CD4-positive, alpha-beta memory T cell (primary cell): ENCODE measurements at regions of chr2 and their contacts with region 1.

Region 1: DNA sequence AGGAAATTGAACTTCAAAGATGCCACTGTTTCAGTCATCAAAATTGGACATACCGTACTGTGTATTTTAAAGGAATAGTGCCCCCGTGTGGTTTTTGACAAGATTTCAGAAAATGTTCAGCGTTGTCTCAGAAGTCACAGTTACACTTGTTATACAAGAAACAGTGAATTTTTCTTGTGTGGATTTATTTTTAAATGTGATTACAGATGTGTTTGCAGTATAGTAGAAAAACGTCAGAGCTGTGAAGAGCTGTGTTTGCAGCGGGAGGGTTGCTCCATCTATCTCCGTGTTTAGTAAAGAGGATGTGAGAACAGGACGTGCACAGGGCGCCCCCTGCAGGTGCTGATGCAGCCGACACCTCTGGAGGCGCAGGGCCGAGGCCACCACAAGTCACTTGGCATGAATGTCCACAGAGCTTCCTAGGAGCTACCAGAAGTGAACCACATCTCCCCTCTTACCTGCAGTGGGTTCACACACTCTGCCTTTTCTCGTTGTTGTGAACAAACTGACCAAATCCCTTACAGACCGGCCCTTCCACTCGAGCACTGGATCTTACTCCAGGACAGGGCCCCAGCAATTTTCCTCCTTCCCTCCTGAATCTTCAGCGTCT is 73.1 kb downstream of the CACNB4 start:
- DNase-seq: peak; percentile 68 to 75 (median 73)
- H3K4me3 ChIP-seq: peak overlapping the region; percentile 3 to 30
- H3K4me3 Mint-ChIP-seq: peak overlapping the region; percentile 83 to 96 (median 88)
- H3K27ac ChIP-seq: no peak overlapping the region
- H3K27ac Mint-ChIP-seq: no peak overlapping the region
- H3K4me1 ChIP-seq: no peaks in the 10 kb centered on the region
- H3K4me1 Mint-ChIP-seq: peaks cover 6 to 10% (median 8%) of the 10 kb centered on the region in 4 donors
- H3K27me3 ChIP-seq: no peaks in the 10 kb centered on the region
- H3K27me3 Mint-ChIP-seq: peaks cover 3 to 4% of the 10 kb centered on the region in 2 donors

Region 2: GRCh38 chr2:151878655-151879563 is 146.9 kb before region 1 on chr2:
- CTCF ChIA-PET with region 1: no interaction called
- POLR2A ChIA-PET with region 1: no interaction called
- intact Hi-C with region 1: no loop called
- DNase-seq: no peak
- H3K4me3 ChIP-seq: no peak overlapping the region
- H3K4me3 Mint-ChIP-seq: no peak overlapping the region
- H3K27ac ChIP-seq: no peak overlapping the region
- H3K27ac Mint-ChIP-seq: peak overlapping the region in 1 of 7 donors; percentile 4
- H3K4me1 ChIP-seq: no peaks in the 10 kb centered on the region
- H3K4me1 Mint-ChIP-seq: no peaks in the 10 kb centered on the region
- H3K27me3 ChIP-seq: no peaks in the 10 kb centered on the region
- H3K27me3 Mint-ChIP-seq: peaks cover 0 to under 1% of the 10 kb centered on the region in 2 donors

Region 3: DNA sequence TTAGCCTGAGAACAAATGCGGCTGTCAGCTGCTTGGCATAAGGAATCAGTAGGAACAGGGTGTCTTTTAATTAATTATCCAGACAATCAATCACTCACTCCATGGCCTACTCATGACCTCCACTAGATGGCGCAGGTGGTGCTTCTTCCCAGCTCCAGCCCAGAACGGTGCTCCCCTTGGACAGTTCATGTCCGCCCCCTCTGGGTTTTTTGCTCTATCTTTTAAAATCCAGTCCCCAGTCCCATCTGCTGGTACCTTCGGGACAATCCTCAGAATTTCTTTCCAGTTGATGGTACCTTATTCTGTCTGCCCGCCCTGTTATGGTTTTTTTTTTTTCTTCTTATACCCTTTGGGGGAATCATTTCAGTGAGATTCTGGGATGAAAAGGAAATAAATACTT is 26.7 kb before region 1 on chr2:
- CTCF ChIA-PET with region 1: interaction called, 53 read pairs
- POLR2A ChIA-PET with region 1: no interaction called
- intact Hi-C with region 1: loop called (anchors 2 kb)
- DNase-seq: peak in 4 of 5 donors; percentile 7 to 30 (median 26)
- H3K4me3 ChIP-seq: no peak overlapping the region
- H3K4me3 Mint-ChIP-seq: no peak overlapping the region
- H3K27ac ChIP-seq: no peak overlapping the region
- H3K27ac Mint-ChIP-seq: no peak overlapping the region
- H3K4me1 ChIP-seq: no peaks in the 10 kb centered on the region
- H3K4me1 Mint-ChIP-seq: peaks cover 0 to under 1% (median 0%) of the 10 kb centered on the region in 4 donors
- H3K27me3 ChIP-seq: no peaks in the 10 kb centered on the region
- H3K27me3 Mint-ChIP-seq: peaks cover 0 to 5% of the 10 kb centered on the region in 2 donors

Region 4: DNA sequence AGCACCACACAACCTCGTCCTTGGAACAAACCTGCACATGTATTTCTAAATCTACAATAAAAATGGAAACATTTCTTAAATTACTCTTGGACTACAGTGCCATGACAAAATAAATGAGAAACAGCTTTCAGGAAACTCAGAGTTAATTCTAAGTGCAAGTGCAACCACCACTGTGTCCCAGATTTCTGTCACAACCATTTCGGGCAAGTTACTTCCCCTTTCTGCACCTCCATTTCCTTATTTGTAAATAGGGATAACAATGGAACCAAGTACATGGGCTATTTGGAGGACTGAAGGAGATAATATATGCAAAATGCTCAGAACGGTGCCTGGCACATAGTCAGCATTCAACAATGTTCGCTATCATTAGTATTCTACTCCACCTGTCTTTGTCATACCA is 20.2 kb before region 1 on chr2:
- CTCF ChIA-PET with region 1: interaction called, 88 read pairs
- POLR2A ChIA-PET with region 1: no interaction called
- intact Hi-C with region 1: loop called (anchors 2 kb)
- DNase-seq: no peak
- H3K4me3 ChIP-seq: no peak overlapping the region
- H3K4me3 Mint-ChIP-seq: no peak overlapping the region
- H3K27ac ChIP-seq: no peak overlapping the region
- H3K27ac Mint-ChIP-seq: no peak overlapping the region
- H3K4me1 ChIP-seq: peaks cover 4% of the 10 kb centered on the region
- H3K4me1 Mint-ChIP-seq: peaks cover 6 to 11% (median 6%) of the 10 kb centered on the region in 4 donors
- H3K27me3 ChIP-seq: no peaks in the 10 kb centered on the region
- H3K27me3 Mint-ChIP-seq: peaks cover 0 to 7% of the 10 kb centered on the region in 2 donors

Region 5: GRCh38 chr2:152012697-152013096 is 13.1 kb before region 1 on chr2:
- CTCF ChIA-PET with region 1: interaction called, 88 read pairs
- POLR2A ChIA-PET with region 1: no interaction called
- intact Hi-C with region 1: no loop called
- DNase-seq: no peak
- H3K4me3 ChIP-seq: no peak overlapping the region
- H3K4me3 Mint-ChIP-seq: no peak overlapping the region
- H3K27ac ChIP-seq: no peak overlapping the region
- H3K27ac Mint-ChIP-seq: no peak overlapping the region
- H3K4me1 ChIP-seq: no peaks in the 10 kb centered on the region
- H3K4me1 Mint-ChIP-seq: no peaks in the 10 kb centered on the region
- H3K27me3 ChIP-seq: no peaks in the 10 kb centered on the region
- H3K27me3 Mint-ChIP-seq: peaks cover 8 to 9% of the 10 kb centered on the region in 2 donors

Region 6: DNA sequence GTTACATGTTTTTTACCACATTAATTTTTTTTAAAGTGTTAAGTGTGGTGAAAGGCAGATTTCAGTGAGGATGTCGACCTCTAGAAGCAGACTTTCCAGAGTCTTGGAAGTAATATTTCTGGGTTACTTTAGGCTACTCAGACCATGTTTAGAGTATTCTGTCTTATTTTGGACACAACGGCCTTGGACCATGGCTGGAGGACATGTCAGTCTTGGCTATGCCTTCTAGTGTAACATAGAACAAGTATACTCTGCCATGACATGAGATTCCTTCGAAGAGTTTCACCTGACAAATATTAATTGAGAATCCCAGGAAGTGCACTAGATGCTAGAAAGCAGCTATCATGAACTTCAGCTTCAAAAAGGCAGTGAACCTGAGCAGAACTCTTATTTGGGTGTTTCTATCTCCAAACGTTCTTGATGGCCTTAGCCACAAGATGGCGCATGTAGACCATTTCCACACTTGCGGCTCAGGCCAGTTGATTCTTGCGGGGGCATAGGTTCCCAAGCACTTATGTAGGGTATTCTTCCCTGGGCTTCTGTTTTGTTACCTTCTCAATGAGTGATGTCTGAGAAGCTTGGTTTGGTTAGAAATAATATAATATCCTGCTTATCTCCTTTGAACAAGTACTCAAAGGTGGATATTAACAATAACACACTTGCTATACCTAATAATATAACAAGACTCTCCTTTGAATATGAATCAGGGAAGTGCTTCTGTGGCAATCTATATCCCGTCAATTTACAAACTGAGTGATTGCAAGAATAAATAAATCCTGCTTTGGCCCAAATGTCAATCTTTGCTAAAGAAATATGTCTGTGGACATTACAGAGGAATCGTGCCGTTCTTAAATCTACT is 11.1 kb after region 1 on chr2:
- CTCF ChIA-PET with region 1: interaction called, 47 read pairs
- POLR2A ChIA-PET with region 1: no interaction called
- intact Hi-C with region 1: no loop called
- DNase-seq: peak in 4 of 5 donors; percentile 34 to 39 (median 37)
- H3K4me3 ChIP-seq: no peak overlapping the region
- H3K4me3 Mint-ChIP-seq: no peak overlapping the region
- H3K27ac ChIP-seq: no peak overlapping the region
- H3K27ac Mint-ChIP-seq: no peak overlapping the region
- H3K4me1 ChIP-seq: no peaks in the 10 kb centered on the region
- H3K4me1 Mint-ChIP-seq: no peaks in the 10 kb centered on the region
- H3K27me3 ChIP-seq: no peaks in the 10 kb centered on the region
- H3K27me3 Mint-ChIP-seq: peaks cover 0 to 2% of the 10 kb centered on the region in 2 donors

Region 7: DNA sequence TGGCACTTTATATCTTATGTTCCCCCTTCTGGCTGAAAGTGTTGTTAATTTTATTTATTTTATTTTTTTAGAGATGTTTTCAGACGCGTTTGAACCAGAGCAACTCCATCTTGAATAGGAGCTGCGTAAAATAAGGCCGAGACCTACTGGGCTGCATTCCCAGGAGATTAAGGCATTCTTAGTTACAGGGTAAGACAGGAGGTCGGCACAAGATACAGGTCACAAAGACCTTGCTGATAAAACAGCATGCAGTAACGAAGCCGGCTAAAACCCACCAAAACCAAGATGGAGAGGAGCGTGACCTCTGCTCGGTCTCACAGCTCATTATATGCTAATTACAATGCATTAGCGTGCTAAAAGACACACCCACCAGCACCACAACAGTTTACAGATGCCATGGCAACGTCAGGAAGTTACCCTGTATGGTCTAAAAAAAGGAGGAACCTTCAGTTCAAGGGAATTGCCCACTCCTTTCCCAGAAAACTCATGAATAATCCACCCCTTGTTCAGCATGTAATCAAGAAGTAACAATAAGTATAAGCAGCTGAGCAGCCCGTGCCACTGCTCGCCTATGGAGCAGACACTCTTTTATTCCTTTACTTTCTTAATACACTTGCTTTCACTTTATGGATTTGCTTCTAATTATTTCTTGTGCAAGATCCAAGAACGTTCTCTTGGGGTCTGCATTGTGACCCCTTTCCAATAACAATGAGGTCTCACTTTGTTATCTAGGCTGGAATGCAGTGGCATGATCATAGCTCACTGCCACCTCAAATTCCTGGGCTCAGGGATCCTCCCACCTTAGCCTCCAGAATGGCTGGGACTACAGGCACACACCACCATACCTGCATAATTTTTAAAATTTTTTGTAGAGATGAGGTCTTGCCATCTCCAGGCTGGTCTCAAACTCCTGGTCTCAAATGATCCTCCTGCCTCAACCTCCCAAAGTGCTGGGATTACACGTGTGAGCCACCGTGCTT is 17.1 kb after region 1 on chr2:
- CTCF ChIA-PET with region 1: interaction called, 47 read pairs
- POLR2A ChIA-PET with region 1: no interaction called
- intact Hi-C with region 1: no loop called
- DNase-seq: no peak
- H3K4me3 ChIP-seq: no peak overlapping the region
- H3K4me3 Mint-ChIP-seq: no peak overlapping the region
- H3K27ac ChIP-seq: no peak overlapping the region
- H3K27ac Mint-ChIP-seq: no peak overlapping the region
- H3K4me1 ChIP-seq: no peaks in the 10 kb centered on the region
- H3K4me1 Mint-ChIP-seq: peaks cover 0 to 2% (median 0%) of the 10 kb centered on the region in 4 donors
- H3K27me3 ChIP-seq: no peaks in the 10 kb centered on the region
- H3K27me3 Mint-ChIP-seq: peaks cover 1 to 2% of the 10 kb centered on the region in 2 donors

Region 8: GRCh38 chr2:152047819-152048471 is 22.2 kb after region 1 on chr2:
- CTCF ChIA-PET with region 1: interaction called, 16 read pairs
- POLR2A ChIA-PET with region 1: no interaction called
- intact Hi-C with region 1: no loop called
- DNase-seq: no peak
- H3K4me3 ChIP-seq: no peak overlapping the region
- H3K4me3 Mint-ChIP-seq: no peak overlapping the region
- H3K27ac ChIP-seq: no peak overlapping the region
- H3K27ac Mint-ChIP-seq: no peak overlapping the region
- H3K4me1 ChIP-seq: no peaks in the 10 kb centered on the region
- H3K4me1 Mint-ChIP-seq: peaks cover 0 to 2% (median 0%) of the 10 kb centered on the region in 4 donors
- H3K27me3 ChIP-seq: no peaks in the 10 kb centered on the region
- H3K27me3 Mint-ChIP-seq: peaks cover 6 to 8% of the 10 kb centered on the region in 2 donors